Left ventricle myocardium superior (tissue), 1 donor: ENCODE measurements at regions of chr7 and their contacts with region 1.

Region 1: GRCh38 chr7:132270517-132270916 is 305.8 kb downstream of the PLXNA4 start:
- DNase-seq: no peak
- ATAC-seq: no peak

Region 2: DNA sequence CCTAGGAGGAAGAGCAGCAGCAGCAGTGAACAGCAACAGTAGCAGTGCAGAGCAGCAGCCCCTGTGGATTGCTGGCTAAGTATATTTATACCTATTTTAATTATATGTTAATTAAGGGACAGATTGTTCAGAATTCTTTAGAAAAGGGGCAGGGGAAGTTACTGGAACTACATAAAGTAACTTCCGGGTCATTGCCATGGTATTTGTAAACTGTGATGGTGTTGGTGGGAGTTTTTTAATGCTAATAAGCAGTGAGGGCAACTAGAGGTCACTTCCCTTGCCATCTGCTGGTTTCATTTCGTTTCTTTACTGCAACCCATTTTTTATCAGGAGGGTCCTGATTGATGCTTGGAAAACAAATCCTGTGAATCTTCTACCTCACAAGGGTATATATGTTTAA is 484.3 kb before region 1 on chr7:
- intact Hi-C with region 1: no loop called
- DNase-seq: no peak
- ATAC-seq: no peak

Region 3: DNA sequence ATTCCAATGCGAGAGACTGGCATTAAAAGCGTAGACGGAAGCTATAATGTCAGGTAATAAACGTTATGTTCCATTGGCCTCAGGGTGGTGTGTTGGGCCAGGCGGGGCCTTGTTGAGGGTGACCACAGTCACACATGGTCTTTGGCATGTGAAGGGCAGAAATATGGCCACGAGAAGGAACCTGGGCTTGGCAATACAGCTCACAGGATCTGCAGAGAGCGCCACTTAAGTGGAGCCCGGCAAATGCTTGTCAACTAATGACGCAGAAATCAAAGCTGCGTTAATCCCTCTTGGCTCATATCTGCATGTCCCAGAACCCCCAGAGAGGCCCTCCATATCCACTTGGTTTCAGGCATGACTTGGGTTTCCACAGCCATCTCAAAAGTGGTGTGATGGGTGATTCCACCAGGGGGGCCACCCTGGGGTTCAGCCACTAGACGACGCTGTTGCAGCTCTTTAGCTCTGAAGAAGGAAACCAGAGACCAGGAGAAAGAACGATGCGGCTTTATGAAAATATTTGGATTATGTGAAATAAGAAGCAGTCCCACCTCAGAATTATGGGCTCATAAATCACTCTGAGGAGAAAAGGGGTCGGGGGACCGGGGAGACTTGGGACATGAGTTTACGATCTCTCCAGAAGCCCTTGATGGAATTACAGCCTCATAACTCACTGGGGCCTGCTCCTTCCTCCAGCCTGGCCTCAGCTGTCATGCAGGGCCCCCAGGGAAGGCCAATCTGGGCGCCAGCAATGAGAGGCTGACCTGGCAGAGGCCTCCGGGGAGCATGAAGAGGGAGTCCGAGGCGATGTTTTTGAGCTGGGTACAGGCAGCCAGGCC is 156.8 kb before region 1 on chr7:
- intact Hi-C with region 1: no loop called
- DNase-seq: no peak
- ATAC-seq: no peak

Region 4: GRCh38 chr7:132290021-132290420 is 19.5 kb after region 1 on chr7:
- intact Hi-C with region 1: no loop called
- DNase-seq: no peak
- ATAC-seq: no peak

Region 5: DNA sequence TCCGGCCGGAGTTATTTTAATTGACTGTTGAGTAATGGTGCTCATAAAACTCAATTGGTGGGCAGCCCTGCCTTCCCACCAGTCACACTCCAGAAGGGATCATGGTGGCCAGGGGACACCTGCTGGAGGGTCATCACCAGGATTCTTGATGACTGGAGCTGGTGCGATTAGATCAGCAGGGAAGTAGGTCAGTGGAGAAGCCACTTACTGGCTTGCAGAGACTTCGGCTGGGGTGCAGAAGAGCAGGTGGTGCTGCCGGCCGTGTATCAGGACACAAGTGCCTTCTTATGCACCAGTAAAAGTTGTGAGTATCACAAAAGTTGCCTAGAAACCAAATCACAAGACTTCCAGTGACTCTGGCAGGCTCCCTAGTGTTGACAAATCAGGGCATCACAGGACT is 894.0 kb after region 1 on chr7:
- intact Hi-C with region 1: loop called (anchors 5 kb)
- DNase-seq: no peak
- ATAC-seq: no peak